Dorsolateral prefrontal cortex (tissue), 120 donors: ENCODE measurements at regions of chr2 and their contacts with region 1.

Region 1: DNA sequence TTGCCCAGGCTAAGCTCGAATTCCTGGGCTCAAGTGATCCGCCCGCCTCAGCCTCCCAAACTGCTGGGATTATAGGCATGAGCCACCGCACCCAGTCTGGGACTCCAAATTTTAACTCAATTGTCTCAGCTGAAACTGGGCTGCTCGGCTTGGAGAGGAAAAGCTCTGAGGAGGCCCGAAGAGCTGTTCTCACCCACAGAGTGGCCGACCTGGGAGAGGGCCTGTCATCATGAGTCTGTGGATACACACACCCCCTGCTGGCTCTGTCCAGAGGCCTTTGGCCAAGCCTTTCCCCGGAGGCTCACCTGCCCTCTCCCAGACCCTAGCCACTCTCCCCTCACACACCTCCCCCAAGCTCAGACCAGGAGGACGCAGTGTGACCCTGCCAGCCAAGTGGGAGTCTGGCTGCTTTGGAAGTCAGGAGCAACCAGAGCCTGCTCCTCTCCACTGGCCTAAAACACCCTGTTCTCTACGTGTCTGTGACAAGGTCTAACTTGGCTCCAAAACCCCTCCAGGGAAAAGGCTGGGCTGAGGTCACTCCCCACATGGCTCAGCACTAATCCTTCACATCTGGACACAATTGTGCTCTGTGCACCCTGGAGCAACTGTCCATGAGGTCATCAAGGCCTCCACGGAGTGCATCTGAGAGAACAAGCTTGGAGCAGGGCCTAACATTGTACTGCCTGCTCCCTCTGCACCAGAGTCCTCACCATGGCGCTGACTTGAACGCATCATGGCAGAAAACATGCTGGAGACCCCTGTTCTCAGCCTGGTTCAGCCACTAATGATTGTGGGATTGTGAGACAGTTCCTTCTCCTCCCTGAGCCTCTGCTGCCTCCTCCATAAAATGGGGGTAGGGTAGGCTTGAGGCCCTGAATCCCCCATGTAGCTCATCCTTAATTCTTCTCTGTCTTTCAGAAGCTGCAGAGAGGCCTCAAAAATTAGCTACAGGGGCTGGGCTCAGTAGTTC is 49.9 kb upstream of the RAB6C start:
- DNase-seq: peak in 9 of 10 donors; percentile 54 to 91 (median 78)
- H3K4me3 ChIP-seq: no peak overlapping the region
- H3K27ac ChIP-seq: peak overlapping the region; percentile 58 to 98 (median 95)
- H3K27me3 ChIP-seq: peaks cover 0 to 30% (median 3%) of the 10 kb centered on the region in 45 donors
- CTCF ChIP-seq: peak in 1 of 56 donors; percentile 23

Region 2: GRCh38 chr2:129379411-129379810 is 550.2 kb before region 1 on chr2:
- intact Hi-C with region 1: no loop called
- DNase-seq: no peak
- H3K4me3 ChIP-seq: no peak overlapping the region
- H3K27ac ChIP-seq: no peak overlapping the region
- H3K27me3 ChIP-seq: no peaks in the 10 kb centered on the region
- CTCF ChIP-seq: no peak

Region 3: DNA sequence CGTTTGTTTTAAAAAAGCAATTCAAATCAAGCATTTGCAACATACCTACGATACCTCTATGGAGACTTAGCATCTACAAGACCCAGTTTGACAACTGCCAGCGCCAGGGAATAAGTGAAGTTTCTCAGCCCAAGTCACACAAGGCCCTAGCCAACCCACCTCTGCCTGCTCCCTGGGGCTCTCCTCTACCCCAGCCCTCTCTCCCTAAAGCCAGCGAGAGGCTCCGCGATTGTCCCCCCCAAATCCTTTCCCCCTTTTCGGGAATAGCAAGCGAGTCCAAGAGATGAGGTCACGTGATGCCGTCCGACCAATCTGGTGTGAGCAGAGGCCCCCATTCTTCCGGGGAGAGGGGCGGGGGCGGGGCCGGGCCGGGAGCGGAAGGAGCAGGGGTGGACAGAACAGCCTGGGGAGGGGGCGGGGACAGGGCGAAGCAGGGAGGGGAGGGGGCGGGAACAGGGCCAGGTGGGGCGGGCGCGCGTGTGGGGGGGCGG is 52.3 kb before region 1 on chr2:
- intact Hi-C with region 1: loop called in 1 of 2 experiments (anchors 5 kb)
- DNase-seq: peak; percentile 88 to 95 (median 94)
- H3K4me3 ChIP-seq: peak overlapping the region; percentile 53 to 95 (median 77)
- H3K27ac ChIP-seq: peak overlapping the region; percentile 27 to 96 (median 86)
- H3K27me3 ChIP-seq: no peaks in the 10 kb centered on the region
- CTCF ChIP-seq: peak in 1 of 56 donors; percentile 10

Region 4: GRCh38 chr2:129975016-129975774 is 45.6 kb after region 1 on chr2:
- intact Hi-C with region 1: loop called in 1 of 2 experiments (anchors 5 kb)
- DNase-seq: peak in 1 of 10 donors; percentile 19
- H3K4me3 ChIP-seq: no peak overlapping the region
- H3K27ac ChIP-seq: peak overlapping the region in 56 of 59 donors; percentile 9 to 96 (median 80)
- H3K27me3 ChIP-seq: peaks cover 0 to 6% (median 0%) of the 10 kb centered on the region in 45 donors
- CTCF ChIP-seq: no peak

Region 5: DNA sequence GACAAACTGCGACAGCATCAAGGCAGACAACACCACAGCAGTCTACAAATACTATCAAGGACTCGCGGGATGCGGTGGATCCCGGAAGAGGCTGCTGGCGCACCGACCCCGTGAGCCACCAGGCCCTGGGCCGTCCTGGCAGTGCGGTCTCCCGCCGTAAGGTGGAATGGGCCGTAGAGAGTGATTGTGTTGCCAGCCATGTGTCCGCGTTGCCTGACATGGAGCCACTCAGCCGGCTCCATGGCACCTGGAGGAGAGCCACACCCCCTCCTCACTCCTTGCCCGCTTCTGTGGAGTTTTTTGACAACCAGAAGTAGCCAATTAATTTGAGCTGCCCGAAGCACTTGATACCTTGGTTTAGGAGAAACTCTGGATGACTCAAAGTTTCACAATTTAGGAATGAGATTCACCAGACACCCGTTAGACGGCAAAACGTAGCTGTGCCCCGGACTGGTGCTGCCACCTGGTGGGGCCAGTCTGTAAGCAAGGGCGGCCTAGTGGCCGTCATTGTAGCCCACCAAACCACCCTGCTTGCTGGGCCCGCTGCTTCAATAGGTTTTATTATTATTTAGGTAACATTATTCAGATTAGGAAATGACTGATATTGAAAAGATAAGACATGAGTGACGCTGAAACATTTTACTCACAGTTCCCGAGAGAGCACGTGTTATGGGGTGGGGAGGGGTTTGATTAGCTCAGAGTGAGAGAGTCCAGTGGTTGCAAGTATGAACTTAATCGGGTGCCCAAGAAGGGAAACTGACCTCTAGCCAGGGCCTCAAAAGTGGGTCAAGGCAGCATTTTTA is 402.9 kb after region 1 on chr2:
- intact Hi-C with region 1: loop called in 1 of 2 experiments (anchors 5 kb)
- DNase-seq: peak in 9 of 10 donors; percentile 54 to 81 (median 70)
- H3K4me3 ChIP-seq: peak overlapping the region in 8 of 59 donors; percentile 3 to 31 (median 16)
- H3K27ac ChIP-seq: no peak overlapping the region
- H3K27me3 ChIP-seq: peaks cover 0 to 29% (median 2%) of the 10 kb centered on the region in 45 donors
- CTCF ChIP-seq: peak; percentile 78 to 98 (median 92)